H1 (cell line): ENCODE measurements at regions of chr2 and their contacts with region 1.

Region 1: GRCh38 chr2:85813982-85814801 is 60.4 kb downstream of the ATOH8 start:
- DNase-seq: peak; percentile 81 to 97
- H3K4me3 ChIP-seq: no peak overlapping the region
- H3K27ac ChIP-seq: no peak overlapping the region
- H3K4me1 ChIP-seq: no peaks in the 10 kb centered on the region; a peak in 4 of 7 replicates
- H3K27me3 ChIP-seq: no peaks in the 10 kb centered on the region; a peak in 1 of 7 replicates
- CTCF ChIP-seq: peak; percentile 95 to 99 (median 99)
- EP300 ChIP-seq: no peak
- POLR2A ChIP-seq: no peak
- RAD21 ChIP-seq: peak; percentile 97 to 98

Region 2: DNA sequence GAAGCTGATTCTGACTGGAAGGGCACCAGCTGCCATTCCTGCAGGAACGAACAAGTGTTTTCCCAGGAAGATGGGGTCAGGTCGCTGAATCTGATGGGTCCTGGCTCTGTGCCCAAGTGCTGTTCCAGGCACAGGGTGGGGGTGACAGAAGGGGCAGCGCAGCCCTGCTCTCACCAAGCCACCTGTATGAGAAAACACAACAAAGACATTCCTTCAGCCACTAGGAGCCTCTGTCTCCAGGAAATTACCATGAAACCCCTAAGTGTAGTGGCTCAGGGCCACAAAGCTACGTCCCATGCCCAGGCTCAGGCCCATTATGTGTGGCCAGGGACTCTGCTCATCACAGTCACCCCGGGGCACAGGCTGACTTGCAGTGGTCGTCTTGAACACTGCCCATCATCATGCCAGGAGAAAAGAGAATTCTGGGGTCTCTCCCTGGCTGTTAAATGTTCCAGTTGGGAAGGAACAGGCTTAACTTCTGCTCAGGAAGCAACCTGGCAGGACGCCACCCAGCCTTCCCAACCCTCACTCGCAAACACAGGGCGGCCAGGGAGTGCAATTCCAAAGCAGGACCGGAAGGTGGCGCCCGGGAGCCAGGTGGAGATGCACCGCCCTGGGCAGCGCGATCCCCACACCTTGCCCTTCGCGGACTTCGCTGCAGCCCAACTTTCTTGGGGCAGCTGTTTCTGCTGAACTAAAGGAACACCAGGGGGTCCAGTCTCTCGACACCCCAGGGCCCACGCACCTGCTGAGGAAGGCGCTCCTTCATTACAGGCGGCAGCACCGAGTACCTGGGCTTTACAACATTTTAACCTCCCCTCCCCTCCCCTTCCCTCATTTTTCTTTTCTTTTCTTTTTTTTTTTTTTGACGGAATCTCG is 135.2 kb before region 1 on chr2:
- CTCF ChIA-PET with region 1: interaction called, 13 read pairs
- POLR2A ChIA-PET with region 1: no interaction called
- DNase-seq: peak; percentile 38 to 97
- H3K4me3 ChIP-seq: peak overlapping the region in 1 of 4 experiments; percentile 45; a peak in 1 of 8 replicates
- H3K27ac ChIP-seq: no peak overlapping the region
- H3K4me1 ChIP-seq: peaks cover 0 to 7% (median 1%) of the 10 kb centered on the region in 4 experiments; a peak in 1 of 7 replicates
- H3K27me3 ChIP-seq: no peaks in the 10 kb centered on the region; a peak in 1 of 7 replicates
- CTCF ChIP-seq: peak; percentile 95 to 99 (median 98)
- EP300 ChIP-seq: no peak
- POLR2A ChIP-seq: no peak
- RAD21 ChIP-seq: peak; percentile 86 to 90

Region 3: GRCh38 chr2:85723707-85724360 is 90.4 kb before region 1 on chr2:
- CTCF ChIA-PET with region 1: interaction called, 97 read pairs
- POLR2A ChIA-PET with region 1: no interaction called
- DNase-seq: no peak
- H3K4me3 ChIP-seq: no peak overlapping the region
- H3K27ac ChIP-seq: no peak overlapping the region
- H3K4me1 ChIP-seq: no peaks in the 10 kb centered on the region
- H3K27me3 ChIP-seq: no peaks in the 10 kb centered on the region
- CTCF ChIP-seq: no peak
- EP300 ChIP-seq: no peak
- POLR2A ChIP-seq: no peak
- RAD21 ChIP-seq: no peak

Region 4: DNA sequence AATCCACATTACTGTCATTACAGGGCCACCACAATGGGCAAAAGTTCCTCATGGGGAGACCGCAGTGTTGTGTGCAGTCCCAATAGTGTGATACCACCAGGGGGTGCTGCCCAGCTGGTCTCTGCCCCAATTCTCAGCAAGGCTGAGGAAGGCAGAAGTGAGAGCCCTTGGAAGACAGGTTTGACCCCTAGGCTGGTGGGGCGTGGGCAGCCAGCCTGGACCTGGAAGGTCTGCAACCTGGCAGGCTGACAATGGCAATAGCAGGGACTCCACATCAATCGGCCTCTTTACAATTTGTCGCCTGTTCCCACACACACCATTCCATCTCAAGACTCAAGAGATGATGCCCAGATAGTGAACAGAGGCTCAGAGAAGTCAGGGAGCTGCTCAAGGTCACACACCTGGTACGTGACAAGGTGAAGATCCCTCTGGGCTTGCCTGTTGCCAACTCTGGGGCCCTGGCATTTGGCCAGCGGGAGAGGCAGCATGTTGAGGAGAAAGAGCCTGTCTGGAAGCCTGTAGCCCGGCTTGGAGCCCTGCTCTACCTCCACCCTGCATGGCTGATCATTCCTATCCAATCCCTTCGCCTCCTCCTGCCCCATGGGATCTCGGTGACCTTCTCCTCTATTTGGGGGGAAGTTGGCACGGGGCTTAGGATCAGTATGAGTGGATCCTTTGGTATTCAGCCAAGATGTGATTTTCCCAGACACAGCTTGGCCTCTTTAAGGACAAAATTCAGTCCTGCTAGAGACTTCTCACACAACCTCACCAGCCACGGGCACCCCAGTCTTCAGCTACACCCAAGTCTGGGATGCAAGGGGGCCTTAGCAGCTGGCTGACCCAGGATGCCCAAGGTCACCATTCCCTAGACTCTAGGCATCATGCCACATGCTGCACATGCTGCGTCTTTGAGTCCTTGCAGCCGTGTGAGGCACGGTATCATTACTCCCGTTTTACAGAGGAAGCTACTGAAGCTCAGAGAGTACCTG is 63.3 kb before region 1 on chr2:
- CTCF ChIA-PET with region 1: interaction called, 128 read pairs
- POLR2A ChIA-PET with region 1: interaction called, 3 read pairs
- DNase-seq: peak; percentile 25 to 83
- H3K4me3 ChIP-seq: no peak overlapping the region
- H3K27ac ChIP-seq: no peak overlapping the region
- H3K4me1 ChIP-seq: peaks cover 0 to 10% (median 8%) of the 10 kb centered on the region in 4 experiments; a peak in 5 of 7 replicates
- H3K27me3 ChIP-seq: peaks cover 39 to 57% (median 49%) of the 10 kb centered on the region in 4 experiments
- CTCF ChIP-seq: peak in 2 of 3 experiments; percentile 91 to 93; a peak in 3 of 4 replicates
- EP300 ChIP-seq: no peak
- POLR2A ChIP-seq: no peak
- RAD21 ChIP-seq: peak; percentile 81 to 91

Region 5: GRCh38 chr2:85772019-85772745 is 42.0 kb before region 1 on chr2:
- CTCF ChIA-PET with region 1: interaction called, 40 read pairs
- POLR2A ChIA-PET with region 1: no interaction called
- DNase-seq: peak in 1 of 2 experiments; percentile 66
- H3K4me3 ChIP-seq: peak overlapping the region in 2 of 4 experiments; percentile 5 to 7; a peak in 2 of 8 replicates
- H3K27ac ChIP-seq: no peak overlapping the region
- H3K4me1 ChIP-seq: peaks cover 0 to 39% (median 26%) of the 10 kb centered on the region in 4 experiments; a peak in 6 of 7 replicates
- H3K27me3 ChIP-seq: peaks cover 0 to 27% (median 17%) of the 10 kb centered on the region in 4 experiments; a peak in 6 of 7 replicates
- CTCF ChIP-seq: peak in 2 of 3 experiments; percentile 7 to 29; a peak in 2 of 4 replicates
- EP300 ChIP-seq: no peak
- POLR2A ChIP-seq: no peak
- RAD21 ChIP-seq: peak in 1 of 2 experiments; percentile 4; a peak in 2 of 4 replicates

Region 6: DNA sequence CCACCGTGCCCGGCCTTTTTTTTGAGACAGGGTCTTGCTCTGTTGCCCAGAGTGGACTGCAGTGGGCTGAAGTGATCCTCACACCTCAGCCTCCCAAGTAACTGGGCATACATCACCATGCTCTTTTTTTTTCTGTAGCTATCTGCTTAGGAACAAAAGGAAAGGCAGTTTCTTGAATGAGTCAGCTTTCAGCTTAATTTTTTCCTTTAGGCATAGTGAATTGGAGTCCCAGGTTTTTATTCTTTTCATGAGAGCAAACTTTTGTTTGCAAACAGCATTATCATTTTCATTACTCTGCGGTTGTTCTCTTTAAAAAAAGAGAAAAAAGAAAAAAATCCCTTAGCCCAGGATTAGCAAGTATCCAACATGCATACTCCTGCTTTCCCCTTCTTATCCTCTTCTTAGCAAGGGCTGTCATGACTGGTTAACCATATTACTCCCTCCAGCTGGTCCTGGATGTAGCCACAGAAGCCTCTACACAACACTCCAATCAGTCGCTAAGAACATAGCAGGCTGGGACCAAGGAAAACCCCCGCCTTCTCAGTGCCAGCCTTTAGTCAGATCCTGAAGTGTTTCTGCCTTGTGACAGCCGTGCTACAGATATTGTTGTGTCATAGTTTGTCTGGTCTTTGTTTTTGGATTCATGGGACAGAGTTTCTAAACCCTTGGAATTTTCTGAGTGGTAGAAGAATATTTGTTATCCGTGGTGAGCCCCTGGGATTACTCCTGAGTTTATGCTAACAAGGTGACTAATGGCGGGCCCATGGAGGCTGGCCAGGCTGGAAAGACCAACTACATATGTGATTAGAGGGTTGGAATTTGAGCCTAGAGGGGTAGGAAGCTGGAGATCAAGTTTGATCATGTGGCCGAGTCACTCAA is 97.9 kb after region 1 on chr2:
- CTCF ChIA-PET with region 1: no interaction called
- POLR2A ChIA-PET with region 1: no interaction called
- DNase-seq: no peak
- H3K4me3 ChIP-seq: no peak overlapping the region
- H3K27ac ChIP-seq: no peak overlapping the region
- H3K4me1 ChIP-seq: no peaks in the 10 kb centered on the region
- H3K27me3 ChIP-seq: no peaks in the 10 kb centered on the region
- CTCF ChIP-seq: no peak
- EP300 ChIP-seq: no peak
- POLR2A ChIP-seq: no peak
- RAD21 ChIP-seq: no peak

Region 7: GRCh38 chr2:86028766-86029381 is 214.7 kb after region 1 on chr2:
- CTCF ChIA-PET with region 1: no interaction called
- POLR2A ChIA-PET with region 1: no interaction called
- DNase-seq: no peak
- H3K4me3 ChIP-seq: no peak overlapping the region
- H3K27ac ChIP-seq: no peak overlapping the region
- H3K4me1 ChIP-seq: no peaks in the 10 kb centered on the region
- H3K27me3 ChIP-seq: no peaks in the 10 kb centered on the region
- CTCF ChIP-seq: no peak
- EP300 ChIP-seq: no peak
- POLR2A ChIP-seq: no peak
- RAD21 ChIP-seq: no peak